HEK293 (cell line): ENCODE measurements at regions of chr9 and their contacts with region 1.

Region 1: GRCh38 chr9:131125128-131126058 is at the start of gene NUP214:
- H3K4me3 ChIP-seq: peak within 1 kb of the TSS; percentile 84
- H3K27ac ChIP-seq: peak within 1 kb of the TSS; percentile 28
- H3K4me1 ChIP-seq: no peaks in the 10 kb centered on the region
- CTCF ChIP-seq: no peak

Region 2: DNA sequence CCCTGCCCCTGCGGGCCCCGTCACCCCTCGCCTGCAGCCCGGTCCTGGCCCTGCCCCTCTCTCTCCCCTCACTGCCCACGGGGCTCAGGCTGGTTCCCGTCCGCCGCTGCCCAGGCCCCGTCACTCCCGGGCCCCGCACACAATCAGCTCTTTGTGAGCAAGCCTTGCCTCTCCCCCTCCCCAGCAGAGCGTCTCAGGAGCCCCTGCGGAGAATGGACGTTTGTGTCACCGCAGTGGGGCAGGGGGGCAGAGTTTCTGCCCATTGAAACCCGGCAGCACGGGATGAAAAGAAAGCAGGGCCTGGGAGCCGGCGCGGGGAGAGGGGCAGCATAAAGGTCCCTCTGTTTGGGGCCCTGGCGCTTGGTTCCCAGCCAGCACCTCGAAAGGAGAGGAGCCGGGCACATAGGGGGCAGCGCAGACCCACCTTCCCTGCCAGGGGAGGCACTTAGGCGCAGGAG is 13.5 kb before region 1 on chr9:
- CTCF ChIA-PET with region 1: interaction called, 4 read pairs
- POLR2A ChIA-PET with region 1: interaction called, 11 read pairs
- H3K4me3 ChIP-seq: no peak overlapping the region
- H3K27ac ChIP-seq: no peak overlapping the region
- H3K4me1 ChIP-seq: no peaks in the 10 kb centered on the region
- CTCF ChIP-seq: no peak

Region 3: DNA sequence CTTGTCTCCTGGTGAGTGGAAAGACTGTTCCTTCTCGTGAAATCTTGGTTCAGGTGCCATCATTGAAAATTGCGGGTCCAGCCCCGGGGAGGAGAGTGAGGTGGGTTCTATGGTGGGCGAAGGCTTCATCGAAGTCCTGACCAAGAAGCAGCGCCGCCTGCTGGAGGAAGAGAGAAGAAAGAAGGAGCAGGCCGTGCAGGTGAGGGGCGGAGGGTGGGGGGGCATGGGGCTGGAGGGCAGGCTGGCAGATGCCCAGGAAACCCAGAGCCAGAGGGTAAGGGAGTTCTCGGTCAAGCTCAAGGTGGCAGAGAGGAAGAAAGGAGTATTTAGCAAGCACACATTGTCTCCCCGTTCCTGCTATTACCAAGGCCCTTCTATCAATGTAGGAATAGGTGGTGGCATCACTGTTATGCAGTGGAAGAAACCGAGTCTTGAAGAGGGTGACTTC is 353.1 kb after region 1 on chr9:
- CTCF ChIA-PET with region 1: no interaction called
- POLR2A ChIA-PET with region 1: no interaction called
- H3K4me3 ChIP-seq: no peak overlapping the region
- H3K27ac ChIP-seq: no peak overlapping the region
- H3K4me1 ChIP-seq: no peaks in the 10 kb centered on the region
- CTCF ChIP-seq: 0 out of 2 replicates have a peak, but pooled peaks have one; percentile 16